CD8-positive, alpha-beta T cell (primary cell): ENCODE measurements at regions of chr19 and their contacts with region 1.

Region 1: DNA sequence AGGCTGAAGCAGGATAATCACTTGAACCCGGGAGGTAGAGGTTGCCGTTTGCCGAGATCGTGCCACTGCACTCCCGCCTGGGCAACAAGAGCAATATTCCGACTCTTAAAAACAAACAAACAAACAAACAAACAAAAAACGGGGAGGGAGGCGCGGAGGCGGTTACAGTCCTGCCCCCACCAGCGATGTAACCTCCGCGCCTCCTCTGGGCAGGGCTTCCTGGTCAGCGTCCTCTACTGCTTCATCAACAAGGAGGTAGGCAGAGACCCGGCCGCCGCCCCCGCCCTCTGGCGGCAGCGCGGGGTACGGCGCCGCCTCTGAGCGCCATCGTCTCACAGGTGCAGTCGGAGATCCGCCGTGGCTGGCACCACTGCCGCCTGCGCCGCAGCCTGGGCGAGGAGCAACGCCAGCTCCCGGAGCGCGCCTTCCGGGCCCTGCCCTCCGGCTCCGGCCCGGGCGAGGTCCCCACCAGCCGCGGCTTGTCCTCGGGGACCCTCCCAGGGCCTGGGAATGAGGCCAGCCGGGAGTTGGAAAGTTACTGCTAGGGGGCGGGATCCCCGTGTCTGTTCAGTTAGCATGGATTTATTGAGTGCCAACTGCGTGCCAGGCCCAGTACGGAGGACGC is 10.2 kb downstream of the SNRPD2 start:
- DNase-seq: peak; percentile 74 to 94 (median 85)
- ATAC-seq: peak; percentile 76
- H3K4me3 ChIP-seq: peak overlapping the region; percentile 34 to 50
- H3K4me3 Mint-ChIP-seq: peak overlapping the region; percentile 73
- H3K27ac ChIP-seq: no peak overlapping the region
- H3K27ac Mint-ChIP-seq: peak overlapping the region; percentile 49
- H3K4me1 ChIP-seq: peaks cover 17% of the 10 kb centered on the region
- H3K4me1 Mint-ChIP-seq: peaks cover 20% of the 10 kb centered on the region
- H3K27me3 ChIP-seq: peaks cover 0 to 4% of the 10 kb centered on the region in 2 experiments
- H3K27me3 Mint-ChIP-seq: no peaks in the 10 kb centered on the region
- CTCF ChIP-seq: peak; percentile 97

Region 2: DNA sequence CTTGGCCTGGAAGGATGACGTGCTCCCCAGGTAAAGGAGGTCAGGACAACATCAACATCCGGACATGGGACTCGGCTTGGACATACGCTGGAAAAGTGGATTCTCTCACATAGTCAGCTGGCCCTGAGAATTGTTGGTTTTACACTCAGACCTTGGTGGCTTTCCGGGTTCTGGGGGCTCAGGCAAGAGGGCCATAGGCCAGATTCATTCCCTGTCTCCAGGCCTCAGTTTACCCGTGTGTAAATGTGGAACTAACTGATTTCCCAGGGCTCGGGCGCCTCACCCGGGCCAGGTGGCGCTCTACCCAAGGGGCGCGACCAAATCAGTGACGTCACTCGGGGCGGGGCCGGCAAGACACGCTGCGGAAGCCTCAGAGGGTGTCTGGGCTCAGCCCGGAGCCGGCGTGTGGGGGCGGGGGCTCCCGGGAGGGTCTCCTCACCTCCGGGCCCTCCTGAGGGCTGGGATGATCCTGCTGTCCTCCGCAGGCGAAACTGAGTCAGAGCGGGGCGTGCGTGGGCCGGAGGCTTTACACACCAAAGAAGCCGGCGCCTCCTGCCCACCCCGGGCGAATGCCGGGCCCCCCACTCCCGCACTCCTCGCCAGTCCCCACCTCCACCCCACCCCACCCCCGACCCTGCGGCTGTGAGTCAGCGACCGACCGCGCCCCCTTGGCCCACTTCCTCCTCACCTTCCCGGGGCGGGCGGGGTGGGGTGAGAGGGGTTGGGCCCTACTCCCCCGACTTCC is 175.1 kb before region 1 on chr19:
- CTCF ChIA-PET with region 1: no interaction called
- POLR2A ChIA-PET with region 1: no interaction called
- intact Hi-C with region 1: no loop called
- DNase-seq: peak; percentile 93 to 99 (median 97)
- ATAC-seq: peak; percentile 79
- H3K4me3 ChIP-seq: peak overlapping the region; percentile 74 to 90
- H3K4me3 Mint-ChIP-seq: peak overlapping the region; percentile 88
- H3K27ac ChIP-seq: peak overlapping the region; percentile 85 to 91
- H3K27ac Mint-ChIP-seq: peak overlapping the region; percentile 93
- H3K4me1 ChIP-seq: peaks cover 33% of the 10 kb centered on the region
- H3K4me1 Mint-ChIP-seq: peaks cover 39% of the 10 kb centered on the region
- H3K27me3 ChIP-seq: no peaks in the 10 kb centered on the region
- H3K27me3 Mint-ChIP-seq: no peaks in the 10 kb centered on the region
- CTCF ChIP-seq: peak; percentile 32

Region 3: GRCh38 chr19:45591004-45591637 is 90.4 kb before region 1 on chr19:
- CTCF ChIA-PET with region 1: no interaction called
- POLR2A ChIA-PET with region 1: no interaction called
- intact Hi-C with region 1: loop called in 1 of 2 experiments (anchors 2 kb)
- DNase-seq: peak in 6 of 9 experiments; percentile 14 to 49 (median 34)
- ATAC-seq: peak; percentile 63
- H3K4me3 ChIP-seq: no peak overlapping the region
- H3K4me3 Mint-ChIP-seq: no peak overlapping the region
- H3K27ac ChIP-seq: no peak overlapping the region
- H3K27ac Mint-ChIP-seq: no peak overlapping the region
- H3K4me1 ChIP-seq: no peaks in the 10 kb centered on the region
- H3K4me1 Mint-ChIP-seq: no peaks in the 10 kb centered on the region
- H3K27me3 ChIP-seq: peaks cover 0 to 17% of the 10 kb centered on the region in 2 experiments
- H3K27me3 Mint-ChIP-seq: peaks cover 35% of the 10 kb centered on the region
- CTCF ChIP-seq: peak; percentile 31

Region 4: DNA sequence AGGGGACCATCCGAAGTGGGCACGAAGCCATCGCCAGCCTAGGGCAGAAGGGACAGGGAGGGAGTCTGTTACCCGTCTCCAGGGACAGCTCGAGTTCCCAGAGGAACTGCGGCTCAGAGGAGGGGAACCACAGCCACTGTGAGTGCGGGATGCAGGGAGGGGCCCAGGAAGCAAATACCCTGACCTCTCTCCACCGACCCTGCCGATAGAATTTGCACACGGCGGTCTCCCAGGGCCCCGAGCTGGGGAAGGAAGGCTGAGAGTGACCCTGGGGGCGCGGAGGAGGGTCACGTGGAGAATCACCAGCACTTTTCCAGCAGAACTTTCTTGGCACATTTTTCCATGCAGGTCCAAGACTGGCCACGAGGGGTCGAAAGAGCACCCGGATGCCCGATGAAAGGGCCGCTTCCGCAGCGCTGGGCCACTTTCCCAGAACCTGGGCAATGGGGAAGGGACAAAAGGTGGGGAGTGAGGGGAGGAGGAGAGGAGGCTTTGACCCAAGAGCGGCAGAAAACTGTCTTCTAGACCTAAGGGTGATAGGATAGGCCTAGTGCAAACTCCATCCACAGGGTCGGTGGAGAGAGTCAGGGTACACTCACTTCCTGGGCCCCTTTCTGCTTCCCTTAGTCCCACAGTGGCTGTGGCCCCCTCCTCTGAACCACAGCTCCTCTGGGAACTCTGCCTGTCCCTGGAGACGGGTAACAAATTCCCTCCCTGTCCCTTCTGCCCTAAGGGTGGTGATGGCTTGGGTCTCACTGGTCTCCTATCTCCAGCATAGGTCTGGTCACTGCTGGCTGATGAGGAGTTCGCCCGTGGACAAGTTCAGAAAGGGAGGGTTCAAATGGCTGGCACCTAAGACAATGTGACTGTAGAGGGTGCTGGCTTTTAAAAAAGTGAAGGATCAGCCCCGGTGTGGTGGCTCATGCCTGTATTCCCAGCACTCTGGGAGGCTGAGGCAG is 74.2 kb before region 1 on chr19:
- CTCF ChIA-PET with region 1: interaction called, 5 read pairs
- POLR2A ChIA-PET with region 1: no interaction called
- intact Hi-C with region 1: loop called (anchors 1 to 2 kb)
- DNase-seq: peak in 7 of 9 experiments; percentile 17 to 71 (median 55)
- ATAC-seq: peak; percentile 46
- H3K4me3 ChIP-seq: no peak overlapping the region
- H3K4me3 Mint-ChIP-seq: no peak overlapping the region
- H3K27ac ChIP-seq: peak overlapping the region in 1 of 2 experiments; percentile 0
- H3K27ac Mint-ChIP-seq: no peak overlapping the region
- H3K4me1 ChIP-seq: no peaks in the 10 kb centered on the region
- H3K4me1 Mint-ChIP-seq: peaks cover 9% of the 10 kb centered on the region
- H3K27me3 ChIP-seq: peaks cover 4 to 11% of the 10 kb centered on the region in 2 experiments
- H3K27me3 Mint-ChIP-seq: peaks cover 8% of the 10 kb centered on the region
- CTCF ChIP-seq: peak; percentile 84

Region 5: GRCh38 chr19:45670670-45671453 is 10.6 kb before region 1 on chr19:
- CTCF ChIA-PET with region 1: interaction called, 8 read pairs
- POLR2A ChIA-PET with region 1: interaction called, 15 read pairs
- intact Hi-C with region 1: loop called (anchors 1 kb)
- DNase-seq: peak in 8 of 9 experiments; percentile 10 to 73 (median 54)
- ATAC-seq: peak; percentile 37
- H3K4me3 ChIP-seq: no peak overlapping the region
- H3K4me3 Mint-ChIP-seq: no peak overlapping the region
- H3K27ac ChIP-seq: no peak overlapping the region
- H3K27ac Mint-ChIP-seq: no peak overlapping the region
- H3K4me1 ChIP-seq: peaks cover 32% of the 10 kb centered on the region
- H3K4me1 Mint-ChIP-seq: peaks cover 30% of the 10 kb centered on the region
- H3K27me3 ChIP-seq: peaks cover 0 to 4% of the 10 kb centered on the region in 2 experiments
- H3K27me3 Mint-ChIP-seq: no peaks in the 10 kb centered on the region
- CTCF ChIP-seq: no peak

Region 6: DNA sequence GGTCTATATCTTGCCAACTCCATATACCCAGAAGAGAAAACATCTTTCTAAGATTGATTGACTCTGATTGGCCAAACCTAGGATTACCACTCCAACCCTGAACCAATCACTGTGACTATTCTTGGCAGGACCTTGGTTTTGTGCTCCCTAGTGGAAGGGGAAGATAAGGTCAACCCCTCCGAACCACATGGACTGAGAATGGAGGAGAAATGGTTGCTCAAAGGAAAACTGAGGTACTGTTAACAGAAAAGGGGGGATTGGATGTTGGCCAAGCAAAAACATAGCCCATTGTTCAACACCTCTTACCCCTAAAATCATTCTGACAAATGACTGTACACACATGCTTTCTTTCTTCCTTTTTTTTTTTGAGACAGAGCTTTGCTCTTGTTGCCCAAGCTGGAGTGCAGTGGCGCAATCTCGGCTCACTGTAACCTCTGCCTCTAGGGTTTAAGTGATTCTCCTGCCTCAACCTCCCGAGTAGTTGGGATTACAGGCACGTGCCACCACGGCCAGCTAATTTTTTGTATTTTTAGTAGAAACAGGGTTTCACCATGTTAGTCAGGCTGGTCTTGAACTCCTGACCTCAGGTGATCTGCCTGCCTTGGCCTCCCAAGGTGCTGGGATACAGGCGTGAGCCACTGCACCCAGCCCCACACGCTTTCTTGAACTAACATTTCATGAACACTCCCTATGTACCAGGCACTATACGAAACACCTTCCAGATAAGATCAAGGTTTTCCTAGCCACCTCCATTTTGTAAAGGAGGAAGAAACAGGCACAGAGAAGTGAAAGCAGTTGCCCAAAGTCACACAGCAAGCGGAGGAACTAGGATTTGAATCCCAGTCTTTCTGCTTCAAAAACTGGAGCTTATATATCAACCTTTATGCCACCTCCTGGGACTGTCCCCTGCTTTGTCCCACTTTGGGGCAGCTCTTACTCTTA is 58.3 kb after region 1 on chr19:
- CTCF ChIA-PET with region 1: no interaction called
- POLR2A ChIA-PET with region 1: no interaction called
- intact Hi-C with region 1: no loop called
- DNase-seq: no peak
- ATAC-seq: no peak
- H3K4me3 ChIP-seq: no peak overlapping the region
- H3K4me3 Mint-ChIP-seq: no peak overlapping the region
- H3K27ac ChIP-seq: no peak overlapping the region
- H3K27ac Mint-ChIP-seq: no peak overlapping the region
- H3K4me1 ChIP-seq: no peaks in the 10 kb centered on the region
- H3K4me1 Mint-ChIP-seq: no peaks in the 10 kb centered on the region
- H3K27me3 ChIP-seq: no peaks in the 10 kb centered on the region
- H3K27me3 Mint-ChIP-seq: peaks cover 6% of the 10 kb centered on the region
- CTCF ChIP-seq: no peak

Region 7: DNA sequence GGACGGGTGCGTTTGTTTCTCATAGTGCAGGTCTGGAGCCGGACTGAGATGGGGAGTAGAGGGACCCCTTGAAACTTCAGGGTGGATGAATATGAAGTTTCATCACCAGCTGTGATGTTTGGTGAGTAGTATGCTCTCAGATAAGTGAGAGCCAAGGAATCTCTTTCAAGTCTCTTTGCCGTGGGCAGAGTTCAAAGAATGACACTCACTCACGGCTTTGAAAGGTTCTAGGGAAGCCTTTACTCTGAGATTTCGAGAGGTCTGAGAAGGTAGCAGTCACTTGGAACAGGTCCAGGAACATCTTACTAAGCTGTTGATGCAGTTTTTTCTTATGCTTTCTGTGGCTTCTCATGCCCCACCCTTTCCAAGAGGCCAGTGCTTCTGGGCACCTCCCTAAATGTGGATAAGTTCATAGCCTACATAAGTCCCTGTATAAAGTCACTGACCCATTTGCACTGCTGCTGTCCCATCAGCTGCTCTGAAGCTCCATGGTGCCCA is 466.3 kb after region 1 on chr19 and contains the start of gene IGFL2:
- CTCF ChIA-PET with region 1: no interaction called
- POLR2A ChIA-PET with region 1: no interaction called
- intact Hi-C with region 1: no loop called
- DNase-seq: no peak
- ATAC-seq: no peak
- H3K4me3 ChIP-seq: no peak within 1 kb of the TSS
- H3K4me3 Mint-ChIP-seq: no peak within 1 kb of the TSS
- H3K27ac ChIP-seq: no peak within 1 kb of the TSS
- H3K27ac Mint-ChIP-seq: no peak within 1 kb of the TSS
- H3K4me1 ChIP-seq: no peaks in the 10 kb centered on the region
- H3K4me1 Mint-ChIP-seq: no peaks in the 10 kb centered on the region
- H3K27me3 ChIP-seq: peaks cover 0 to 2% of the 10 kb centered on the region in 2 experiments
- H3K27me3 Mint-ChIP-seq: peaks cover 42% of the 10 kb centered on the region
- CTCF ChIP-seq: no peak
- total RNA-seq, gene IGFL2: not detected